GM10248 (cell line): ENCODE measurements at regions of chr2 and their contacts with region 1.

Region 1: GRCh38 chr2:112481050-112481527 is 867 bp upstream of the TTL start:
- DNase-seq: peak; percentile 89
- CTCF ChIP-seq: peak; percentile 95

Region 2: DNA sequence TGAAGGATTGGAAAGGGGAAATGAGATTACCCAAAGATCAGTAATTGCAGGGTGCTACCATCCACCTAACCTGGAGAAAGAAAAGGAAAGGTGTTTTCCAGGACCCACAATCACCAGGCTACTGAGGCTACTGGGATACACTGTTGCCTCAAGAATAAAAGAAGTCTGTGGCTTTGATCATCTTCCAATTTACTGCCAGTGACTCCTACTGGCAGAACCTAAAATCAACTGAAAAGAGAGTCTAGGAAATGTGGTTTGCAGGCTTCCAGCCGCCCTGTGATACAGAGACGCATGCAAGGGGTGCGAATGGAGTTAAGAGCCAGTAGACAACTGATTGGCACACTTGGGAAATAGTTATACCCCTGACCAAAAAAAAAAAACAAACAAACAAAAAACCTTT is 15.7 kb before region 1 on chr2:
- CTCF ChIA-PET with region 1: interaction called, 16 read pairs
- POLR2A ChIA-PET with region 1: no interaction called
- DNase-seq: no peak
- CTCF ChIP-seq: no peak

Region 3: DNA sequence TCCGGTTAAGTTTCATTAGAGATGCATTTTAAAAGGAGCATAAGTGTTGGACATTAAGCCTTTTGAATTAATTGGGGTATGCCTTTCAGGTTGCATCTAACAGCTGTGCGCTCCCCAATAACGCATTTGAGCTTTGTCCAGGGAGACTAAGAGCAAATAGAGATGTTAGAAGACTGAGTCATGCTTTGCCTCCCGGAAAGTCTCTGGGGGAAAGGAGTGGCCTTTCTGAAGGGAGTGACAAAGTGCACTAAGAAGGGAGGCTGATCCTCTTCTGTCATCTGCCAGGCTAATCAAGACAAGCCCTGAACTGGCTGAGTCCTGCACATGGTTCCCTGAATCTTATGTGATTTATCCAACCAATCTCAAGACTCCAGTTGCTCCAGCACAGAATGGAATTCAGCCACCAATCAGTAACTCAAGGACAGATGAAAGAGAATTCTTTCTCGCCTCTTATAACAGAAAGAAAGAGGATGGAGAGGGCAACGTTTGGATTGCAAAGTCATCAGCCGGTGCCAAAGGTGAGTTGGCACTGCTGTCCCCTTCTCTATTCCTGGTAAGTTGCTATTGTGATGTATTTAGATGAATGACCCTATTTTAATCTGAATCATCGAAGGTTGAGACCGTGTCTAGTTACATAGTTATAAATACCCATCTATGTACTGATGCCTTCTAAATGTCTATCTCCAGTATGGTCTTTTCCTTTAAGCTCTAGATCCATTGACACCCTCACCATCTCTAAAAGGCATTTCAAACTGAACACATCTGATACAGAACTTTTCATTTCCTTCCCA is 13.0 kb after region 1 on chr2:
- CTCF ChIA-PET with region 1: interaction called, 15 read pairs
- POLR2A ChIA-PET with region 1: no interaction called
- DNase-seq: no peak
- CTCF ChIP-seq: no peak

Region 4: GRCh38 chr2:112584134-112584890 is 103.2 kb after region 1 on chr2 and contains the start of gene CHCHD5:
- CTCF ChIA-PET with region 1: interaction called, 12 read pairs
- POLR2A ChIA-PET with region 1: no interaction called
- DNase-seq: peak; percentile 91
- CTCF ChIP-seq: no peak